GM18951 (cell line): ENCODE measurements at regions of chr6 and their contacts with region 1.

Region 1: GRCh38 chr6:142387997-142388815 is 86.4 kb downstream of the ADGRG6 start:
- POLR2A ChIP-seq: no peak

Region 2: DNA sequence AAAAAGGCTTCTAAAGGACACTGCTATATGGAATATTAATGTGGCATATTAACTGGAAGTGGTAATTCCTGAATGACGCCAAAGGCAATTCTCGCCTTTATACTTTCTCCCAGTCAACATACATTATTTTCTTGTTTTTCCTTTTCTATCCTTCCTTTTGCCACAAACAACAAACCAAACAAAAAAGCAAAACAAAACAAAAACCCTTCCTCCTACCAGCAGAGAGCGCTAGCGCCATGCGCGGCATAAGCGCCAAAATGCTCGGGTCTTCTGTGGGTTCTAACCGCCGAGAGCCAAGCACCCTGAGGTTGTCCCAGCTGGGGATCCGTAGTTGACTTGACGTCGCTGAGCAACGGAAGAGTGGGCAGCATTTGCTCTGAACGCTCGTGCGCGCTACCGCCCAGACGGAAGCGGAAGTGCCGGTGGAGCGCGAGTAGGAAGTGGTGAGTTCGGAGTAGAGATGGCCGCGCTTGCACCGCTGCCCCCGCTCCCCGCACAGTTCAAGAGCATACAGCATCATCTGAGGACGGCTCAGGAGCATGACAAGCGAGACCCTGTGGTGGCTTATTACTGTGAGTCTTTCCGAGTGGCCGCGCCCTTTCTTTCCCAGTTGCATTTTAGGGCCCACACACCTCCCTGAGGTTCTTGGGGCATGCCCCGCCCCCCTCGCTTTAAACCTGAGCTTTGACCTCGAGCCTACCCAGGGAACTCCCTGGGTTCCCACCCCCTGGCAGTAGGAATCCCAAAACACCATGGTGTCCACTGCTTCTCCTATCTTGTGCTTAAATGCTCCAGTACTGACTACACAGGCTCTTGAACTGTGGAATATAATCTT is 241.2 kb before region 1 on chr6 and contains the starts of genes NMBR and VTA1:
- in situ Hi-C with region 1: loop called (anchors 25 kb)
- POLR2A ChIP-seq: peak; percentile 90